PC-3 (cell line): ENCODE measurements at regions of chr13 and their contacts with region 1.

Region 1: DNA sequence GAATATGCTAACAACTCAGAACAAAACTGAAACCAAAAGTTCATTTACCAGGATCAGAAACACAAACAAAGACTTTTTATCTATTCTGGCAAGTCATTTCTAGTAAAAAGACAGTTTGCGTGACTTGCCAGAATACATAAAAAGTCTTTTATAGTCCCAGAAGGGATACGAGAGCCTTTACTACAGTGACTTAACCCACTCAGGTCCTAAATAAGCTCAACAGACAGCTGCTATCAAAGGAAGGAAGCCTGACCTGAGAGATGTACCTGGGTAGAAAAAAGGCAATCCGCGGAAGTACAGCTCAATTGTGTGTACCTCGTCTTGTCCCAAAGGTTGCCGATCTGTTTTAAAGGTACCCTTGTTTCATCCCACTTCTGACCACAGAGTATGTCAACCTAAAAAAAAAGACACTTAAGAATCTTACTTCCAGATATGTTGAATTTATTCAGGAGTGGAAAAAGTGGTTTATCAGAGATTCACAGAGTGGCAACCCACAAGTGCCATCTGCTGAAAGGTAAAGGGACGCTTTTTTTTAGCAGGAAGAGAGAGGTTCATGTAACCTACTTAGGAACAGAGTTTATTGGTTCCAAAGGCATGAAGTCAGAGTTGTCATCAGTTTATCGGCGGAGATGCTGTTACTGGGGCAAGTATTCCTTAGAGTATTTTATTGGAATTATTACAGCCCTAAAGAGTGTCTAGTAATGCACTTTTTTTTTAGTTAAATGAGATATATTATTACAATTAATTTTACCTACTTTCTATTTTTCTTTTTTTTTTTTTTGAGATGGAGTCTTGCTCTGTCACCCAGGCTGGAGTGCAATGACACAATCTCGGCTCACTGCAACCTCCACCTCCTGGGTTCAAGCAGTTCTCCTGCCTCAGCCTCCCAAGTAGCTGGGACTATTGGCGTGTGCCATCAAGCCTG is 69.7 kb upstream of the C1QTNF9B start:
- DNase-seq: peak; percentile 37
- ATAC-seq: peak; percentile 60
- H3K4me3 ChIP-seq: peak overlapping the region; percentile 65
- H3K27ac ChIP-seq: peak overlapping the region; percentile 33
- H3K4me1 ChIP-seq: peaks cover 16% of the 10 kb centered on the region; the same call in 1 of the 2 replicates
- H3K27me3 ChIP-seq: no peaks in the 10 kb centered on the region
- CTCF ChIP-seq: 0 out of 2 replicates have a peak, but pooled peaks have one; percentile 21

Region 2: DNA sequence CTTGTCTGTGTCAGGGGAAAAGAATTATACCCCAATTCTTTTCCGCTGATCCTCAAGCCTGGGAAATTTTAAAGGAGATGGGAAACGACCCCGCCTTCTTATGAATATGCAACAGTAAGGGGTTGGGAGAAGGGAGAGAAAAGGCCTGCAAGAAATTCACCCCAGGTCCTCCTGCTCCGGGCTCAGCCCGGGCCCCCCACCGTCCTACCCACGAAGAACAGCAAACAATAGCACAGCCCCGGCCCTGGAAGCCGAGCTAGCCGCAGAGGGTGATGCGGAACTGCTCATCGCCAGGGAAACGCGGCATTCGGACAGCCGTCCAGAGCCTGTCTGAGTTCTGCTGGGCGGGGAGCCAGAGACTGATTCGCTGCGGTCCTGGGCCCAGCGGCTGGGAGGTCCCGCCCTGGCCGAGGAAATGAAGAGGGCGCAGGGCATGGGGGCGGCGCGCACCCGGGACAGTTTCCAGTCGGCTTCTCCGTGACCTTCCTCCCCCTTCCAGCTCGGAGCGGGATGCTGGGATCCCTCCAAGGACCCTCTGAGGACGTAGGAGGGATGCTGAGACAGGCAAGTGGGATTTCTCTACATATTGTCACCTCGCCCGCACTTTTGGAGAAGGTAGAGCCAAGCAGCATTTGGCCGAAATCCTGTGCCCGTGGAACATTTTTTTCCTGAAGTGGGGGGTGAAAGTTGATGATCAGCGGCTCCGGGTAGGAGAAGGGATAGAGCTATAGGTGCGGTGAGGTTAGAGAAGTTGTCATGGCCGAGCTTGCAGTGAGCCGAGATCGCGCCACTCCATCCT is 12.6 kb after region 1 on chr13:
- CTCF ChIA-PET with region 1: no interaction called
- POLR2A ChIA-PET with region 1: no interaction called
- intact Hi-C with region 1: loop called (anchors 1 kb)
- DNase-seq: peak; percentile 66
- ATAC-seq: peak; percentile 95
- H3K4me3 ChIP-seq: peak overlapping the region; percentile 74
- H3K27ac ChIP-seq: no peak overlapping the region
- H3K4me1 ChIP-seq: peaks cover 9% of the 10 kb centered on the region
- H3K27me3 ChIP-seq: no peaks in the 10 kb centered on the region
- CTCF ChIP-seq: no peak

Region 3: DNA sequence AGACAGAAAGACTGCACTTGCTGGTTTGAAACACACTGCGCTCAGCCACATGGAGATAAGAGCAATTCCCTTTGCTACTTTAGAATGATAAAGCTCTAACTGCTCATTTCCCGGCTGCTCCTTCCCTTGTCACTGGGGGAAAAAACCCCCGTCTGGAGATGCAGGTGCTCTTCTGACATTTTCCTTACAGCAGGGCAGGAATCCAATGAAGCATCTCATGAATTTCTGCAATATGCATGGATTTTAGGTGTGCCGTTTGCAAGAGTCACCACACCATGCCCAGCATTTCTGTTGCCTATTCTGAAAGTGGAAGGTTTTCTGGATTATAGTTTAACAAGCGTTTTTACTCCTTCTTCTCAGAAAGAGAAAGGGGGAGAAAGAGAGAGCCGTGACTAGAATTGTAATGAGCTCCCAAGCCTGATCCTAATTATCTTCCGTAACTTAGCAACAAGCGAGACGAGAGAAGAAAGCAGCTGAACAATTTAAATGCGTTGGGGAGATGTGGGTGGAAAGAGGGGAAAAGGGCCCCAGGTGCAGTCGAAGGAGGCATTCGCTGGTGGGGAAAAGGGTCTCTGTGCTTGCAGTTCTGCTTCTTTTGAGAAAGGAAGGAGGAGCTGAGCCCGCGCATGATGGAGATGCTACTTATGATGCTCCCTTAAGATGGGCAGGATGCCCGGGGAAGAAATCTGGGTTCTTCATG is 116.9 kb after region 1 on chr13:
- CTCF ChIA-PET with region 1: no interaction called
- POLR2A ChIA-PET with region 1: no interaction called
- intact Hi-C with region 1: no loop called
- DNase-seq: no peak
- ATAC-seq: no peak
- H3K4me3 ChIP-seq: no peak overlapping the region
- H3K27ac ChIP-seq: no peak overlapping the region
- H3K4me1 ChIP-seq: peaks cover 14% of the 10 kb centered on the region
- H3K27me3 ChIP-seq: no peaks in the 10 kb centered on the region
- CTCF ChIP-seq: no peak